ENCODE measurements at regions of chr1 and their contacts with region 1.

Region 1: GRCh38 chr1:83559129-83559840 is 439.6 kb downstream of the TTLL7 start:
- DNase-seq: no peak
- ATAC-seq: peak; percentile 49
- H3K4me3 Mint-ChIP-seq: peak overlapping the region; percentile 3
- H3K27ac Mint-ChIP-seq: peak overlapping the region; percentile 74
- H3K4me1 Mint-ChIP-seq: peaks cover 18% of the 10 kb centered on the region
- H3K27me3 Mint-ChIP-seq: no peaks in the 10 kb centered on the region
- CTCF ChIP-seq: no peak

Region 2: GRCh38 chr1:83508485-83509151 is 50.7 kb before region 1 on chr1:
- CTCF ChIA-PET with region 1: no interaction called
- POLR2A ChIA-PET with region 1: no interaction called
- intact Hi-C with region 1: loop called (anchors 5 kb)
- DNase-seq: no peak
- ATAC-seq: peak; percentile 79
- H3K4me3 Mint-ChIP-seq: peak overlapping the region; percentile 9
- H3K27ac Mint-ChIP-seq: peak overlapping the region; percentile 6
- H3K4me1 Mint-ChIP-seq: peaks cover 21% of the 10 kb centered on the region
- H3K27me3 Mint-ChIP-seq: no peaks in the 10 kb centered on the region
- CTCF ChIP-seq: no peak

Region 3: GRCh38 chr1:83626603-83627002 is 67.3 kb after region 1 on chr1:
- CTCF ChIA-PET with region 1: no interaction called
- POLR2A ChIA-PET with region 1: no interaction called
- intact Hi-C with region 1: no loop called
- DNase-seq: no peak
- ATAC-seq: no peak
- H3K4me3 Mint-ChIP-seq: no peak overlapping the region
- H3K27ac Mint-ChIP-seq: no peak overlapping the region
- H3K4me1 Mint-ChIP-seq: peaks cover 8% of the 10 kb centered on the region
- H3K27me3 Mint-ChIP-seq: no peaks in the 10 kb centered on the region
- CTCF ChIP-seq: no peak

Region 4: DNA sequence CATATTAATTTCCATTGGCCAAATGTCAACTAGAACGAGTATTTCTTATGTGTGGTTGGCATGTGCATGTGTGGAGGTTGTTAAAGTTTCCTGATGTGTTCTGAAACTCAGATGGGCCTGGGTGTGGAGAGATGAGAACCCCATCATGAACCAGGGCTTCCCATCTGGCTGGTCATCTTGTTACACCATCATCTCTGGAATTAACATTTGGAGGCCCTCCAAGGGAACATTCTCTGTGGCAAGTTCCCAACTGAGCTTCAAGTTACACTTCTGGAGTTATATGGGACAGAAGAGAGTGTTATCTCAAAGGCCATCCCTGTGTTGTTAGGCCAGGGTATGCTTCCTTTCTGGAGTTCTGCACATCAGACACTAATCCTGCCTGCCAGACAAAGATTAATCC is 256.0 kb after region 1 on chr1:
- CTCF ChIA-PET with region 1: no interaction called
- POLR2A ChIA-PET with region 1: no interaction called
- intact Hi-C with region 1: no loop called
- DNase-seq: no peak
- ATAC-seq: no peak
- H3K4me3 Mint-ChIP-seq: no peak overlapping the region
- H3K27ac Mint-ChIP-seq: no peak overlapping the region
- H3K4me1 Mint-ChIP-seq: peaks cover 8% of the 10 kb centered on the region
- H3K27me3 Mint-ChIP-seq: no peaks in the 10 kb centered on the region
- CTCF ChIP-seq: no peak